GM12878 (cell line): ENCODE measurements at regions of chr2 and their contacts with region 1.

Region 1: GRCh38 chr2:197383823-197384222 is 51.0 kb downstream of the SF3B1 start:
- DNase-seq: no peak
- ATAC-seq: peak; percentile 36; the same call in 2 of the 3 replicates
- H3K4me3 ChIP-seq: no peak overlapping the region
- H3K27ac ChIP-seq: no peak overlapping the region
- H3K4me1 ChIP-seq: no peaks in the 10 kb centered on the region
- H3K27me3 ChIP-seq: no peaks in the 10 kb centered on the region; a peak in 1 of 4 replicates
- CTCF ChIP-seq: peak in 2 of 3 experiments; percentile 7 to 18; a peak in 1 of 6 replicates
- EP300 ChIP-seq: no peak
- POLR2A ChIP-seq: no peak
- RAD21 ChIP-seq: 0 out of 2 replicates have a peak, but pooled peaks have one; percentile 9

Region 2: DNA sequence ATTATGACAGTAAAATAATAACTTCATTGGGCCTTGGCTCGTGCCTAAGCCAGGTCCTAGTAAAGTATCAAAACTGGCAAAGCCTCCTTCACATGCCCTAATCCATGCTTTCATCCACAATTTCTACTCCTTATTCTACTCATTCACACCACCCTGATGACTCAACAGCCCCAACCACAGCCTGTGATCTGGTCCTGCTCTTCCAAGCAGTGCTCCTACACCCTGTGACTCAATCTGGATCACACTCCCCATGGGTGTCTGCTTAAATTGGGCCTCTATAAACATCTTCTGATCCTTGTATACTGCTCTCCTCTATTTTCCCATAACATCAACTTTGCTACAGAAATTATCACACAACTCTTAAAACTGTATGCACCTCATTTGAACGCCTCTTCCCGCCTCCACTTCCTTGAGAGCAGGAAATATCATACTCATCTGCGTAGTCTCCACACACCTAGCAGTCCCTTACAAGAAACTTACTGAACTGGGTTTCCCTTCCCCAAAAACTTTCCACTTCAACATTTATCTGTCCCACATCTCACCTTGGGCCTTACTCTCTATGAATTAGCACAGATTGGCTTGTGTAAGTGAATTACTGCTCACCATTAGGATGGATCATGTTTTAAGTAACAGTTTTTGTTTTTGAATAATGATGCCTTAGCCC is 600.3 kb before region 1 on chr2:
- CTCF ChIA-PET with region 1: no interaction called
- POLR2A ChIA-PET with region 1: no interaction called
- RAD21 ChIA-PET with region 1: no interaction called
- SMC1A ChIA-PET with region 1: no interaction called
- in situ Hi-C with region 1: loop called (anchors 25 kb)
- intact Hi-C with region 1: loop called (anchors 10 kb)
- DNase-seq: no peak
- ATAC-seq: peak; percentile 56
- H3K4me3 ChIP-seq: no peak overlapping the region
- H3K27ac ChIP-seq: no peak overlapping the region
- H3K4me1 ChIP-seq: no peaks in the 10 kb centered on the region
- H3K27me3 ChIP-seq: no peaks in the 10 kb centered on the region
- CTCF ChIP-seq: no peak
- EP300 ChIP-seq: no peak
- POLR2A ChIP-seq: no peak
- RAD21 ChIP-seq: no peak

Region 3: GRCh38 chr2:197286805-197287598 is 96.8 kb before region 1 on chr2:
- CTCF ChIA-PET with region 1: no interaction called
- POLR2A ChIA-PET with region 1: no interaction called
- RAD21 ChIA-PET with region 1: no interaction called
- SMC1A ChIA-PET with region 1: no interaction called
- in situ Hi-C with region 1: no loop called
- intact Hi-C with region 1: no loop called
- DNase-seq: no peak
- ATAC-seq: peak; percentile 95
- H3K4me3 ChIP-seq: no peak overlapping the region; the same call in 1 of the 2 replicates
- H3K27ac ChIP-seq: peak overlapping the region; percentile 71
- H3K4me1 ChIP-seq: peaks cover 26% of the 10 kb centered on the region
- H3K27me3 ChIP-seq: no peaks in the 10 kb centered on the region
- CTCF ChIP-seq: no peak
- EP300 ChIP-seq: no peak
- POLR2A ChIP-seq: no peak
- RAD21 ChIP-seq: no peak